WTC11 (cell line): ENCODE measurements at regions of chr17 and their contacts with region 1.

Region 1: DNA sequence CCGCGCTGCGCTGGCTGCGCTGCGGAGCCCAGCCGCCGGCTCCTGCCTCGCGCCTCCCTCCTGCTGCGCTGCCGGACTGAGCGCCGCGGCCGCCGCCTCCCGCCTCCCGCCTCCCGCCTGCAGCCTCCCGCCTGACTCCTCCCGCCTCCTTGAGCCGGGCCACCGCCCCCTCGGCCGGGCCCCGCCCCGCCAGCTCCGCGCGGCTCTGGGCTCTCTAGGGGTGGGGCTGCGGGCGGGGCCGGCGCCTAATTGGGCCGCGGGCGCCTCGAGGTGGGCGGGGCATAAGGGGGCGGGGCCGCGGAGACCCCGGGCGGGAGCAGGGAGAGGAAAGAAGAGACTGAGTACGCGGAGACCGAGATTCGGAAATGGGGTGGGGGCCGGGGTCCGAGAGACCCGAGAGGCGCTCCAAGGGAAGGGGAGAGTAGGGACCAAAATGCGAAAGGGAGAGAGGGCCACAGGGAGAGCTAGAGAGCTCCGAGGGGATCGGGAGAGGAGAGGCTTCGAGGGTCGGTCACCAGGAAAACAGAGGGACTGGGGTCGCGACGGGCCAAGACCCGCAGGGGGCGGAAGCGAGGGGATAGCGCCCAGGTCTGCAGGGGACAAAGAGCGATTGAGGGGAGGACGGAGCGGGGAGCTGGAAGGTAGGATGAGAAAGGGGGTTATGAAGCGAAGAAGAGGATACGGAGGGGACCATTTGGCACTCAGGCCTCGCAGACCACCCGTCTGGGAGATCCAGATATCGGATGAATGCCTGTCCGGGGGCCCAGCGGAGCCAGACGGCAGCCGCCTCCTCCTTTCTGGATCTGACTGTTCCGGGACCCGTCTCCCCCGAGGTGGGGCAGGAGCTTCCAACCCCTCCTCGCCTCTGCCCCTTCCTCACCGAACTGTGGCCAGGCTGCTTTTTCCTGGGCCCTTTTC is at the start of gene C1QL1:
- DNase-seq: peak; percentile 97
- ATAC-seq: peak; percentile 78
- H3K4me3 Mint-ChIP-seq: peak within 1 kb of the TSS; percentile 92
- H3K27ac Mint-ChIP-seq: peak within 1 kb of the TSS; percentile 87
- H3K4me1 Mint-ChIP-seq: peaks cover 36% of the 10 kb centered on the region
- H3K27me3 Mint-ChIP-seq: peaks cover 69% of the 10 kb centered on the region
- CTCF ChIP-seq: no peak
- total RNA-seq, gene C1QL1: 13.4 to 16.8 TPM (median 15.6 TPM) in 3 replicates

Region 2: GRCh38 chr17:44979426-44979995 is 11.0 kb after region 1 on chr17:
- CTCF ChIA-PET with region 1: interaction called, 37 read pairs
- POLR2A ChIA-PET with region 1: interaction called, 3 read pairs
- DNase-seq: no peak
- ATAC-seq: no peak
- H3K4me3 Mint-ChIP-seq: no peak overlapping the region
- H3K27ac Mint-ChIP-seq: no peak overlapping the region
- H3K4me1 Mint-ChIP-seq: peaks cover 17% of the 10 kb centered on the region
- H3K27me3 Mint-ChIP-seq: peaks cover 3% of the 10 kb centered on the region; the same call in 1 of the 2 replicates
- CTCF ChIP-seq: no peak

Region 3: GRCh38 chr17:44988044-44988942 is 19.8 kb after region 1 on chr17:
- CTCF ChIA-PET with region 1: interaction called, 24 read pairs
- POLR2A ChIA-PET with region 1: interaction called, 8 read pairs
- DNase-seq: peak; percentile 33
- ATAC-seq: peak; percentile 4
- H3K4me3 Mint-ChIP-seq: peak overlapping the region; percentile 67
- H3K27ac Mint-ChIP-seq: peak overlapping the region; percentile 79
- H3K4me1 Mint-ChIP-seq: peaks cover 34% of the 10 kb centered on the region
- H3K27me3 Mint-ChIP-seq: peaks cover 9% of the 10 kb centered on the region
- CTCF ChIP-seq: no peak

Region 4: GRCh38 chr17:44995436-44996001 is 27.0 kb after region 1 on chr17:
- CTCF ChIA-PET with region 1: interaction called, 16 read pairs
- POLR2A ChIA-PET with region 1: no interaction called
- DNase-seq: no peak
- ATAC-seq: no peak
- H3K4me3 Mint-ChIP-seq: no peak overlapping the region
- H3K27ac Mint-ChIP-seq: no peak overlapping the region
- H3K4me1 Mint-ChIP-seq: peaks cover 5% of the 10 kb centered on the region
- H3K27me3 Mint-ChIP-seq: peaks cover 4% of the 10 kb centered on the region
- CTCF ChIP-seq: no peak

Region 5: GRCh38 chr17:45003877-45004276 is 35.4 kb after region 1 on chr17:
- CTCF ChIA-PET with region 1: interaction called, 21 read pairs
- POLR2A ChIA-PET with region 1: interaction called, 3 read pairs
- DNase-seq: no peak
- ATAC-seq: peak; percentile 39
- H3K4me3 Mint-ChIP-seq: no peak overlapping the region
- H3K27ac Mint-ChIP-seq: no peak overlapping the region
- H3K4me1 Mint-ChIP-seq: peaks cover 33% of the 10 kb centered on the region
- H3K27me3 Mint-ChIP-seq: peaks cover 16% of the 10 kb centered on the region
- CTCF ChIP-seq: no peak

Region 6: DNA sequence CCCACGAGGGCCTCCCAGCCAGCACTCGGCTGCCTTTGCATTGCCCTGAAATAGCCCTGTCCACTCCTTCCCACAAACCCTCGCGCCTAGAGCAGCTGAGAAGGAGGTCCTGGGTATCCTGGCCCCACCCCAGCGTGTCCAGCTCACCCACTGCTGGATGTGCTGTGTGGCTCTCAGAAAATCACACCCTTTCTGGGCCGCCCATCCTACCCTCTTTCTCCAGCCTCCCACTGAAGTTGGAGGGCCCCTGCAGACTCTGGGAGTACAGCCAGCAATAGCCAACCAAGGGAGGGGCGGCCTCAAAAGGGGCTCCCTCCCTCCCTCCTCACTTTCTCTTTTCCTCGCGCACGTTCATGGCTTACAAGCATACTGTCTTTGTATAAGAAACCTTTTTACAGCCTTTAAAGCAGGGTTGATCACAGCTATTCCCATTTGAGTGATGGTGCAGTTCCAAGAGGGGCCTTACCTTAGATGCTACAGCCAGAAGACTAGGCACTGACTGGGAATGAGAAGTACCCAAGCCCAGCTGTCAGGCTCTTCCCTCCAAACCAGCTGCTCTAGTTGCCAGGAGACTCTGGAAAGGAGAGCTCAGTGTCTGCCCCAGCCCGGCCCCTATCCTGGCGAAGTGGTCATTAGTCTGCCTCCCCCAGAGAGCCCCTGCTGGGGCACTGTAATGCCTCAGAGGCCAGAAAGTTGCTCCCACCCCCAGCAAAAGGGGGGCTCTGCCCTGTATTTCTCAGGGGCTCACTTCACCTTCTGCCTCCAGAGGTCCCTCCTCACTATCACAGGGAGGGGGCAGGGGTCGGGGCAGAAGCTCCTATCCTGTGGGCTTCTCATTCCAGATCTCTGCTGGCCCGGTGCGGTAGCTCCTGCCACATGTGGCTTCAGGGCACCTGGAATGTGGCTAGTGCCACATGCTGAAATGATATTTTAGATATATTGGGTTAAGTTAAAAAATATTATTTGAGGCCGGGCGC is 44.8 kb after region 1 on chr17:
- CTCF ChIA-PET with region 1: interaction called, 117 read pairs
- POLR2A ChIA-PET with region 1: no interaction called
- DNase-seq: peak; percentile 27
- ATAC-seq: peak; percentile 57
- H3K4me3 Mint-ChIP-seq: no peak overlapping the region
- H3K27ac Mint-ChIP-seq: peak overlapping the region; percentile 21; the same call in 1 of the 2 replicates
- H3K4me1 Mint-ChIP-seq: peaks cover 22% of the 10 kb centered on the region
- H3K27me3 Mint-ChIP-seq: peaks cover 12% of the 10 kb centered on the region
- CTCF ChIP-seq: no peak

Region 7: GRCh38 chr17:45021607-45022287 is 53.3 kb after region 1 on chr17:
- CTCF ChIA-PET with region 1: interaction called, 117 read pairs
- POLR2A ChIA-PET with region 1: no interaction called
- DNase-seq: peak; percentile 72
- ATAC-seq: peak; percentile 62
- H3K4me3 Mint-ChIP-seq: peak overlapping the region; percentile 66
- H3K27ac Mint-ChIP-seq: no peak overlapping the region
- H3K4me1 Mint-ChIP-seq: peaks cover 28% of the 10 kb centered on the region
- H3K27me3 Mint-ChIP-seq: peaks cover 42% of the 10 kb centered on the region
- CTCF ChIP-seq: peak; percentile 85